Aorta (tissue), 5 donors: ENCODE measurements at regions of chr6 and their contacts with region 1.

Region 1: DNA sequence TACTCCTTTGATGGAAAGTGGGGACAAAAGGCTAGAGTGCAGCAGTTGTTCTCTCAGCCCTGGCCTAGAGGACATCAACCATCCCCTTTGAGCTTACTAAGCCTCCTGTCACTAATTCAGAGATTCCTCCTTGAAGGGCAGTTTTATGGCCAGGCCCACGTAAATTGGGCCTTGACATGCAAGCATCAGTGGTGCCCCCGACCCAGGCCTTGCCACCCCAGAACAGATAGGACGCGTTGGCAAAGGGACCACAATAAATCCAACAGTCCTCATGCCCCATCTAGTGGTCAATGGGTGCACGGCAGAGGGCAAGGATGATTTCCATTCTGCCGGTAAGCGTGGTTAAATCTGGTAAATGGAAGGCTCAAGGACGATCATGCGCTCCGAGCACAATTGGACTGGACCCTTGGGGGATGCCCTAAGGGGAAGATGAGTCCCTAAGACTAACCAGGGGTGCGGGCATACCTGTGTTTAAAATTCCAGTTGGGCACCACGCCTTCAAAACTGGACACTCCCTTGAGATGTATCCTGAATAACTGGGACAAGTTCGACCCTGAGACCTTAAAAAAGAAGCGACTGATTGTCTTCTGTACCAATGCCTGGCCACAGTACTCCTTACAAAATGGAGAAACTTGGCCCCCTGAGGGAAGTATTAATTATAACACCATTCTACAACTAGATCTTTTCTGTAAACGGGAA is 32.6 kb downstream of the CEP85L start:
- DNase-seq: peak; percentile 55 to 82
- ATAC-seq: peak; percentile 88
- H3K4me3 ChIP-seq: no peak overlapping the region
- H3K27ac ChIP-seq: no peak overlapping the region
- H3K4me1 ChIP-seq: no peaks in the 10 kb centered on the region
- H3K27me3 ChIP-seq: no peaks in the 10 kb centered on the region

Region 2: GRCh38 chr6:118277631-118278030 is 341.2 kb before region 1 on chr6:
- intact Hi-C with region 1: no loop called
- DNase-seq: no peak
- ATAC-seq: no peak
- H3K4me3 ChIP-seq: no peak overlapping the region
- H3K27ac ChIP-seq: no peak overlapping the region
- H3K4me1 ChIP-seq: no peaks in the 10 kb centered on the region
- H3K27me3 ChIP-seq: no peaks in the 10 kb centered on the region

Region 3: GRCh38 chr6:118509009-118509617 is 109.7 kb before region 1 on chr6:
- intact Hi-C with region 1: loop called in 1 of 2 experiments (anchors 10 kb)
- DNase-seq: no peak
- ATAC-seq: no peak
- H3K4me3 ChIP-seq: no peak overlapping the region
- H3K27ac ChIP-seq: no peak overlapping the region
- H3K4me1 ChIP-seq: peaks cover 2 to 3% of the 10 kb centered on the region in 2 donors
- H3K27me3 ChIP-seq: no peaks in the 10 kb centered on the region